HEK293 (cell line): ENCODE measurements at regions of chr1 and their contacts with region 1.

Region 1: GRCh38 chr1:65276197-65276939 is 33.0 kb upstream of the DNAJC6 start:
- H3K4me3 ChIP-seq: no peak overlapping the region
- H3K27ac ChIP-seq: no peak overlapping the region
- H3K4me1 ChIP-seq: no peaks in the 10 kb centered on the region
- CTCF ChIP-seq: no peak

Region 2: DNA sequence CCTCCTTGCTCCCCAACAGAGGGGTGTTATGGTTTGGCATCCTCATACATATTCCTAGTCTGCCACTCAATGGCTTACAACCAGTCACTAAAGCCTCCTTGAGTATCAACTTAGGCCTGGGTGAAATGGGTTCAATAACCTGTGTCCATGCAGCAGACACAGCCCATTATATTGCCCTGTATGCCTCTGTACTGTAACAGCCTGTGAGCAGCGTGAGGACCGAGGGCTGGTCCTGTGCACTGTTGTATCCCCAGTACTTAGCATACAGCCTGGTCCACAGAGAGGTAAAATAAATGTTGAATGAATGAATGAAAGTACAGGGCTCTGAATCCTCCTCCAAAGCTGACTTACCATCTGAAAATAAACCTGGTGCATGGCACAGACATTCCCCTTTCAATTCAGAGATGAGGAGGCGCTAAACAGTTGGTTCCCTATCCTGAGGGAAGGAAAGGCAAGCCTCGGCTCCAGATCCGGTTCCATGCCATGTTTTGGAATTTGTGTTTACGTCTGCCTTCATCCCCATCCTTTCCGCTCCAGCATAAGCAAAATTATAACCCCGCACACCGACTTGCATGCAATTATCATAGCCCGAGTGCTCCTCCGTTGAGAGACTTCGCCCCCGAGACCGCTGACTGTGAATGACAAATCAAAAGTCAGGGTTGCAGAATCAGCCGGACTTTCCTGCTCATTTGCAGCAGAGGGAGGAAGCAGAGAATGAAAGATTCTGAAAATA is 12.0 kb before region 1 on chr1:
- CTCF ChIA-PET with region 1: no interaction called
- POLR2A ChIA-PET with region 1: no interaction called
- H3K4me3 ChIP-seq: peak overlapping the region; percentile 34
- H3K27ac ChIP-seq: no peak overlapping the region
- H3K4me1 ChIP-seq: peaks cover 5% of the 10 kb centered on the region; the same call in 1 of the 2 replicates
- CTCF ChIP-seq: no peak; the same call in 1 of the 2 replicates

Region 3: GRCh38 chr1:65309304-65310077 is 33.1 kb after region 1 on chr1 and contains the start of gene DNAJC6:
- CTCF ChIA-PET with region 1: interaction called, 10 read pairs
- POLR2A ChIA-PET with region 1: no interaction called
- H3K4me3 ChIP-seq: peak within 1 kb of the TSS; percentile 49
- H3K27ac ChIP-seq: no peak within 1 kb of the TSS
- H3K4me1 ChIP-seq: peaks cover 6% of the 10 kb centered on the region; the same call in 1 of the 2 replicates
- CTCF ChIP-seq: no peak; the same call in 1 of the 2 replicates